ENCODE measurements at regions of chr9 and their contacts with region 1.

Region 1: GRCh38 chr9:34252670-34253459 is 74.0 kb downstream of the UBAP1 start:
- DNase-seq: peak; percentile 87

Region 2: DNA sequence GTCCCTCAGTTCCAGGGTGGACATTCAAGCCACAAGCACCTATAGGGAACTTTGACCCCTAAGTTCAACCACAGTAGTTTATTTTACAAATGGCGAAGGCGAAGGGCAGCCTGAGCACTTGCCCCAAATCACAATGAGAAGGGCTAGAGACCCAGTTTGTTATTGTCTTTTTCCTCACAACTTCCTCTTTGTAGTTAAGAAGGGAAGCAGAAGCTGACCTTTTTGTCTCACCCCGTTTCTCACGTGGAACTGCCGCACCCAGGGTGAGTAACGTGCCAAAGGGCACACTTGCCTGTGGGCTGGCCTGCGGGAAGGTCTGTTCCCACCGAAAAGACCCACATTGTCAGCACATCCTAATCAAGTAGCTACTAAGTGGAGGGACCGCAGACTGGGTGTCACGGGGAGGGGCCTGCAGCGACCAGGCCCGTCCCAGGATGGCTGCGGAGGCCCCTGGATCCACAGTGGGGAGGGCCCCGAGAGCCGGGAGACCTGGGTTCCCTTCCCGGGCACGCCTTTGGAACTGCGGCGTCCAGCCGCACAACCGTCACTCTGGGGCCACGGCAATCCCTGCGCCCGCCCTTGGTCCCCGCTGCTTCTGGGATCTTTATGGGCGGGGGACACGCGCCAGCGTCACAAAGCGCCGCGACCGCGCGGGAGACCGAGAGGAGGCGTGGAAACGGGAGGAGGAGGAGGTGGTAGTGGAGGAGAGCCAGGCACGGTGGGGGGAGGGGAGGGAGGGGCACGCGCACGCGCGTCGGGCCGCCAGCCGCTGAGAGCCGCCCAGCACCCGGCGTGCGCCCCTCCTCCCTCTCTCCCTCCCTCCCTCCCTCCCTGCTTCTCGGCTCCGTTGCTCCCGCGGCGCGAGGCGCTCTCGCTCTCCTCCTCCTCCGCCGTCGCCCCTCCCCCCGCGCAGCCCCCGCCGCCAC is 436.3 kb before region 1 on chr9 and contains the start of gene UBE2R2:
- intact Hi-C with region 1: loop called (anchors 5 kb)
- DNase-seq: peak; percentile 96
- total RNA-seq, gene UBE2R2: 38.8 TPM

Region 3: DNA sequence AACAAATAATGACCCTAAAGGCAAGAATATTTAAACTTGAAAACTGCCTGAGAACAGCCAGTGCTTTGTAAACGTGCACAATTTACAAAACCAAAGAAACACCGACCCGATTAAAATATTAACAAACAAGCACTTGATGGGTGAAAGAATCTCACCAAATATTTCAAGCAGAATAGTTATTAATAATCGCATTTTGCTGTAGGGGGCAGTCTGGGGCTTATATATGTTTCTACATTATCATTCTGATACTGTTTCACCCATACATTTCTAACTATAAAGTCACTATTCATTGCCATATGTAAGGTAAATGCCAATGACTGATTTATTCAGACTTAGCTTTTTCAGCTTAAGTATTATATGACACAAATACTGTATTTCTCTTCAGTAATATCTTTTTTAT is 241.9 kb before region 1 on chr9:
- intact Hi-C with region 1: loop called (anchors 5 kb)
- DNase-seq: no peak

Region 4: DNA sequence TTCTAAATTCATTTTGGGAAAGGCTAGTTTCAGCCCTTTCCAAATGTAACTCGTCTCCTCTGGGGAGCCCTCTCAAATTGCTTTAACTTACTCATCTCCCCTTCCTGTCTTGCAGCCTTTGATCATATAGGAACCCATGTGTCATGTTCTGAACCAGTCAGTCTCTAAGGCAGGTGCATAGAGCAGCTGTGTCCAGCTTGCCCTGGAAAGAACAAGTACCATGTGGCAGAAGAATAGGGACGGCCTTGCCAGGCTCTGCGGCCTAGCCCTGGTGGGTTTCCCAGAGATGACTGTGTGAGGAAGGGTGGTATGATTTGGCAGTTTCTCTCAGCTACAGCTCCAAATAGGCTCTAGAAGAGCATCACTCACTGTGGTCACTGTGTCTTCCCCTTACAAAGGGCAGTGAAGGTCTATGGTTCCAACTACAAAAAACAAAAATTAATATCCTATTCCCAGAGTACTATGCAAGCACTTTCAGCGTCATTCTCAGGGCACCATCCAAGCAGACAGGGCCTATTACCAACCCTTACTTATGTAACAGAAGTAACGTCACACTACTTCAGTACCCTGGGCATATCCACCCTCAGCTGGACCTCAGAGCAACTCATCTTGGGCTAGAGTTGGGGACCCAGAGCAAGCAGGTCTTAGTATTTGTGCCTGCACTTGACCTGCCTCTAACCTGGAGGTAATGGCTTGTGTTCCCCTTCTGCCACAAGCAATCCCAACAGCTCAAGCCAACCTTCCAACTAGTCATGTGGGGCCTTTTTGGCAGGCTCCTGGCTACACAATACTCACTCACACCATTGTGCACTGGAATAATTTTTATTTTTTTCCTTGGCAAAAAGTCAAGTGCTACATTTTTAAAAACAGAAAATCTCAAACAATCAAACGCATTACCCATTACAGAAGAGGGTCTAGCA is 167.0 kb before region 1 on chr9:
- intact Hi-C with region 1: loop called (anchors 5 kb)
- DNase-seq: no peak

Region 5: DNA sequence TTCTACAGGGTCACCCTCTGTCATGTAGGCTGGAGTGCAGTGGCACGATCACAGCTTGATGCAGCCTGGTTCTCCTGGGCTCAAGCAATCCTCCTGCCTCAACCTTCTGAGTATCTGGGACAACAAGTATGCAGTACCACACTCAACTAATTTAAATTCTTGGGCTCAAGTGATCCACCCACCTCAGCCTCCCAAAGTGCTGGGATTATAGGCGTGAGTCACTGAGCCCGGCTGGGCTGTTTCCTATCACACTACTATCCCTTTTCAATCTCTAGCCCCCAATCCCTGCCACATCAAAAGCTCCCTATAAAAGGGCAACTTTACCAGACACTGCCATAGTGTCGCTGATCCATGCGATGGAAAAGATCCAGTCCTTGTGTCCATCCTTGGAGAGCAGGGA is 146.8 kb before region 1 on chr9:
- intact Hi-C with region 1: no loop called
- DNase-seq: no peak

Region 6: DNA sequence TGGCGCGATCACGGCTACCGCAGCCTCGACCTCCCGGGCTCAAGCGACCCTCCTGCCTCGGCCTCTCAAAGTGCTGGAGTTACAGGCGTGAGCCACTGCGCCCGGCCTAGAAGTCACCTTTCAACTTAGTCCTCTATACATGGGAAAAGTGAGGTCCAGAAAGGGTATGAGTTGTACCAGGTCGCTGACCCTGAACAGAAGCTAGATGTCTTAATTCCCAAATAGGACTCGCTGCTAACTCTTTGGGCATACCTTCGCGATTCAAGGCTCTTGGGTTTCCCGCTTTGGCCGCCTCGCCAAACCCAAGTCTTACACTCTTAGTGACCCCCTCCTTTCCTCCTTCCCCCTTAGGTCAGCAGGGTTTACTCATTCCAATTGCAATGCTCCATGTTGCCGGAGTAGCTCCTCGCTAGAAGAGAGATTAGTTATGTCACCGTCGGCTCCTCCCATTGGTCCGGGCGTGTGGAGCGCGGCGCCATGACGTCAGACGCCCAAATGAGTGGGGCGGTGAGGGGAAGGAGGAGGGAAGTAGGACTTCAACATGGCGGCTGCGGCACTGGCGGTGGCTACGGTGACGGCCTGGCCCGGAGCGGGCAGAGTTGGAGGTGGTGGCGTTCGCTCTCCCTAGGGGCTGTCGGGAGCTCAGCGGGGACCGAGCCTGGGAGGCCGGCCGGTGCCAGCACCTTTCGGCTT is 74.2 kb before region 1 on chr9 and contains the start of gene UBAP1:
- intact Hi-C with region 1: loop called (anchors 5 kb)
- DNase-seq: peak; percentile 98
- total RNA-seq, gene UBAP1: 40.6 TPM

Region 7: DNA sequence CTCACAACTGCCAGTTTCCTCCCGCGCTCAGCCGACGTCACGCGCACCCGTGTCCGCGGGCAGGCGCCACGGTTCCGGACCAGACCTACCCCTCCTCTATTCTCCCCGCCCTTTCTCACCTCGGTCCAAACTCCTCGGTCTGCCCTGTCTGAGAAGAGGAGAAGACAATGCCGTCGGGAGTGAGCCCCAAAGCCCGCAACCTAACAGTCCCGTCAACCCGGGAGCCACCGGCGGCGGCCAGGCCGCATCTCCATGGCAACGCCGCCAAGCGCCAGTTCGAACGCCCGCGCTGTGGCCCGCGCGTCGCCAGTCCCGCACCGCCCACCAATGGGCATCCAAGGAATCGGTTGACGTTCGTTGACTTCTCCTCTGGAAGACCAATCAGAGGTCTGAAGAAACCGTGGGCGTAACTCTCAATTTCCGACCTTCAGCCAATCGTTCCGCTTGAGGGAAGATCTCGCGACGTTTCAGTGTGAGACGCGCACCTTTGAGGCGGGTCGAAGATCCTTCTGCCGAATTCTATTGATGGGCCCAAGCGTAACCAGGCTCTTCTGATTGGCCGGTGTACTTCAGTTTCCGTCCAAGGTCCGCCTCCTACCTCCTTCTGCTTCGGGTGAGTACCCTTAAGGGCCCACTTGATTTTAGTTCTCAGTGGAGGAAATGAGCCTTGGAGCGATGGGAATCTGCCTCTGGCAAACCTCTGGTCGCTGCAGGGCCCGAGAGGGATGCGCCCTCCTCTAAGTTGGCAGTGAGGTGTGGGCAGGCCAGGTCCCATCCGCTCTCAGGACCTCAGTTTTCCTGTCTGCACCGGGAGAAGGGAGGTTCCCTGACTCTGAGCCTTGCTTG is 76.3 kb after region 1 on chr9 and contains the starts of genes KIF24 and NUDT2:
- intact Hi-C with region 1: no loop called
- DNase-seq: peak; percentile 97
- total RNA-seq, gene KIF24: 0.89 TPM
- total RNA-seq, gene NUDT2: 23.0 TPM

Measured in cardiac septum (tissue), 1 donor.